ENCODE measurements at regions of chr18 and their contacts with region 1.

Region 1: DNA sequence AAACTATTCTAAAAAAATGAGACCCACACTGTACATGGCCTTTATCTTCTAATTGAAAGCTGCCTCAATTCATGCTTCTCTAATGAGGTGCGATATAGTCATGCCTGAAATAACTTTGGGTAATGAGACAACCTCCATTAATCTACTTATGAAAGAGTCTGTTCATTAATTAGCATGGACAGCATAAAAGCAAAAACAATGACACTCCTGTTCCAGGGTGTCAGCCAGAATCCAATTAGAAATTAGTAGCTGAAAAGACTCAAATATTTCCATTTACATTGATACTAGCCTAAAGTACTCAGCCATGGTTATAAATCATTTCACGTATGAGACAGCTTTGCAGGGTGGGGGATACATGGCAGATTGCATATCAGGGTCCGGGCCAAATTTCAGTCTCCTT is 288.7 kb downstream of the AKAIN1 start:
- DNase-seq: no peak
- ATAC-seq: no peak
- H3K4me3 ChIP-seq: no peak overlapping the region
- H3K27ac ChIP-seq: no peak overlapping the region
- H3K4me1 ChIP-seq: no peaks in the 10 kb centered on the region
- H3K27me3 ChIP-seq: no peaks in the 10 kb centered on the region
- CTCF ChIP-seq: no peak
- POLR2A ChIP-seq: no peak

Region 2: DNA sequence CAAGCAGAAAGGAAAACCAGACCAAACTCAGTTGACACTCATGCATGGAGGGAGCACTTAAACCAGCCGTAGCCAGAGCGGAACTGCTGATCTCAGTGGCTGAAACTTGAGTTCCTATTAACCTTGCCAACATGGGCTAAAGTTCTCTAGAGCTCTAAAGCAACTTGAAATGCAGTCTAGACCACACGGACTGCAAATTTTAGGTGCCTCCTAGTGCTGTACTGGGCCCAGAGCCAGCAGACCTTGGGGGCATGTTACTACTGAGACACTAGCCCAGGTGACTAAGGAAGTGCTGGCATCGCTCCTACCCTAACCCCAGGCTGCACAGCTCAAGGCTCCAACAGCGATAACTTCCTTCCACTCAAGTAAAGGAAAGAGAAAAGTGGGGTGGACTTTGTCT is 52.2 kb after region 1 on chr18:
- intact Hi-C with region 1: loop called in 1 of 10 experiments (anchors 10 kb)
- DNase-seq: no peak
- ATAC-seq: no peak
- H3K4me3 ChIP-seq: no peak overlapping the region
- H3K27ac ChIP-seq: no peak overlapping the region
- H3K4me1 ChIP-seq: no peaks in the 10 kb centered on the region
- H3K27me3 ChIP-seq: no peaks in the 10 kb centered on the region
- CTCF ChIP-seq: no peak
- POLR2A ChIP-seq: no peak

Region 3: DNA sequence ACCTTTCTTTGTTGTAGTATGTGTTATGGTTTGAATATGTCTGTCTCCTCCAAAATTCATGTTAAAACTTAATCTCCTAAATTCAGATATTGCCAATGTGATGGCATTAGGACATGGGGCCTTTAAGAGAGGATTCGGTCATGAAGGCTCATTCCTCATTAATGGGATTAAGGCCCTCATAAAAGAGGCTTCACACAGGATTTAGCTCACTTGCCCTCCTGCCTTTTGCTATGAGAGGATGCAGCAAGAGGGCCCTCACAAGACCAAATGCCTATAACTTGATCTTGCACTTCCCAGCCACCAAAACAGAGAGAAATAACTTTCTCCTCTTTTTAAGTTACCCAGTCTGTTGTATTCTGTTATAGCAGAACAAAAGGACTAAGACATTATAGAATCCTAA is 367.5 kb after region 1 on chr18:
- intact Hi-C with region 1: no loop called
- DNase-seq: no peak
- ATAC-seq: no peak
- H3K4me3 ChIP-seq: no peak overlapping the region
- H3K27ac ChIP-seq: no peak overlapping the region
- H3K4me1 ChIP-seq: no peaks in the 10 kb centered on the region
- H3K27me3 ChIP-seq: no peaks in the 10 kb centered on the region
- CTCF ChIP-seq: no peak
- POLR2A ChIP-seq: no peak

Measured in heart left ventricle (tissue), 16 donors.